ENCODE measurements at regions of chr3 and their contacts with region 1.

Region 1: GRCh38 chr3:185498503-185499396 is at the start of gene TMEM41A:
- DNase-seq: peak; percentile 94
- H3K4me3 Mint-ChIP-seq: peak within 1 kb of the TSS; percentile 89
- H3K27ac Mint-ChIP-seq: peak within 1 kb of the TSS; percentile 78
- H3K4me1 Mint-ChIP-seq: peaks cover 17% of the 10 kb centered on the region
- H3K27me3 Mint-ChIP-seq: no peaks in the 10 kb centered on the region
- total RNA-seq, gene TMEM41A: 13.1 to 14.6 TPM

Region 2: GRCh38 chr3:185282696-185283394 is 215.9 kb before region 1 on chr3:
- CTCF ChIA-PET with region 1: no interaction called
- intact Hi-C with region 1: loop called (anchors 1 kb)
- DNase-seq: peak; percentile 98
- H3K4me3 Mint-ChIP-seq: peak overlapping the region; percentile 99
- H3K27ac Mint-ChIP-seq: peak overlapping the region; percentile 77
- H3K4me1 Mint-ChIP-seq: peaks cover 23% of the 10 kb centered on the region
- H3K27me3 Mint-ChIP-seq: peaks cover 18% of the 10 kb centered on the region

Region 3: DNA sequence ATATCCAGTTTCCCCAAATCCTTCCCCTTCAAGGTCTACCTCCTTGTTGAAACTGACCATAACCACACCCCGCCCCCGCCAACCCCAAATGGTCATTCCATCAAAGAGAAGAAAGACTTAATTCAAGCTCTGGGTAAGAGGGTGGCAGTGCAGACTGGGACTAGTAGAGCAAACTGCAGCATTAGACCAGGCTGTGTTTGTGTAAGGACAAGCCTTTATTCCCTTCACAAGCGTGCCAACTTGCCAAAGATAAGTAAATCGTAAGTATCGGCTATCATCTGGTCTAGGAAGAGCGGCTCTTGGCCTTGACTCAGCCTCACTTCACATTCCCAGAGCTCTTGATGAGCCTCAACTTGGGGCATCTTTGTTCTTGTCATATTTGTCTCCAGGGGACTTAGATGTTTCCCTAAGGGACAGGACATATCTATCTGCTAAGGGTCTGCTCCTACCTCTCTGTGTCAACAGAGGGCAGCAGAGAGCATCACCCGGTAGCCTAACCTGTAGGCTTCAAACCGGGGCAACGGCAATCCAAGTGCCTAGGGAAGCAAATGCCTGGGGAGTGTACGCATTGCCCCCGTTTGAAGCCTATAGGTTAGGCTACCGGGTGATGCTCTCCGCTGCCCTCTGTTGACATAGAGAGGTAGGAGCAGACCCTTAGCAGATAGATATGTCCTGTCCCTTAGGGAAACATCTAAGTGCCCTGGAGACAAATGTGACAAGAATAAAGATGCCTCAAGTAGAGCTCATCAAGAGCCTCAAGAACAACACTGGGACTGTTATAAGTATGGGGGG is 144.7 kb before region 1 on chr3:
- CTCF ChIA-PET with region 1: no interaction called
- intact Hi-C with region 1: loop called (anchors 2 kb)
- DNase-seq: peak; percentile 83
- H3K4me3 Mint-ChIP-seq: no peak overlapping the region
- H3K27ac Mint-ChIP-seq: no peak overlapping the region
- H3K4me1 Mint-ChIP-seq: no peaks in the 10 kb centered on the region
- H3K27me3 Mint-ChIP-seq: peaks cover 24% of the 10 kb centered on the region

Region 4: GRCh38 chr3:185552358-185552877 is 53.7 kb after region 1 on chr3 and contains the start of gene LIPH:
- CTCF ChIA-PET with region 1: no interaction called
- intact Hi-C with region 1: loop called (anchors 1 kb)
- DNase-seq: peak; percentile 26
- H3K4me3 Mint-ChIP-seq: no peak within 1 kb of the TSS
- H3K27ac Mint-ChIP-seq: no peak within 1 kb of the TSS
- H3K4me1 Mint-ChIP-seq: peaks cover 10% of the 10 kb centered on the region
- H3K27me3 Mint-ChIP-seq: no peaks in the 10 kb centered on the region
- total RNA-seq, gene LIPH: not detected

Region 5: DNA sequence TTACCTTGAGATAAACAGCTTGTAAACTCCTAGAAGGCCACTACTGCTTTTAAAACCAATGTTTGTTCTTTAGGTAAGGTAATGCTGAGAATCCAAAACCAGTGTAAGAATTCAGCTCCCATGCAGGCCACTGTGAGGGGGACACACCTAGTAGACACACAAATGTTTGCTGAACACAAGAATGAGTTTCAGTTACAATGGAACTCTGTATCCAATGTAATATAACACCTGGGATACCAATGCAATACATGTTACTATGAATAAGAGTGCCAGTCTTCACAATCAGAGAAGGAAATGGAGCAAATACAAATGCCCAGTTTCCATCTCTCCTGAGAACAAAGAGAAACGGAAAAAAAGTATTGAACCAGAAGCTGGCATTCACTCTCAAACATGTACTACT is 260.2 kb after region 1 on chr3:
- CTCF ChIA-PET with region 1: no interaction called
- intact Hi-C with region 1: no loop called
- DNase-seq: no peak
- H3K4me3 Mint-ChIP-seq: no peak overlapping the region
- H3K27ac Mint-ChIP-seq: no peak overlapping the region
- H3K4me1 Mint-ChIP-seq: peaks cover 2% of the 10 kb centered on the region
- H3K27me3 Mint-ChIP-seq: peaks cover 30% of the 10 kb centered on the region